GM13977 (cell line): ENCODE measurements at regions of chr7 and their contacts with region 1.

Region 1: DNA sequence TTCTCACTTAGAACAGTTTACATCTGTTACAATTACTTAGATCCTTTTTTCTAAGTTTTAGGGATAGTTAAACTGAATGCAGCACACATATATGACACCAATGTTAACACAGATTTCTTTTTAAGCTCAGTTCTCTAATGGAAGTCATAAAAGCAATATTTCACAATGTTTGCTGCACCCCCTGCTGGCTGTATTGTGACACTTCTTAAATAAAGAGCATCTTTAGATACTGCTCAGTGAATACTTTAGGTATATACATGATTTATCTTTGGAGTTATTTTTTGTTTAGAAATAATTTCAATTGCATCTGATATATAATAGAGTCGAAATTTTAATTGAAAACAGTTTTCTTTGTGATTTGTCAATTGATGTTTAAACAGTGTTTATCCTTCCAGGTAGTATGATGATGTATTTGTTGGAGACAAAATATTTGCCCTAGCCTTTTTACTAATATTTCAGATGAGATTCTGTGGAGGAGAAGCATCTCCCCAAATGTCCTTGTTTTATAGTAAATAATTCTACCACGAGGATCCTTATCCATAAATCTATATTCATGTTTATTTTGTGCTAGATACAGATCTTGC is 174.4 kb downstream of the ST7 start:
- DNase-seq: no peak
- CTCF ChIP-seq: peak; percentile 62

Region 2: DNA sequence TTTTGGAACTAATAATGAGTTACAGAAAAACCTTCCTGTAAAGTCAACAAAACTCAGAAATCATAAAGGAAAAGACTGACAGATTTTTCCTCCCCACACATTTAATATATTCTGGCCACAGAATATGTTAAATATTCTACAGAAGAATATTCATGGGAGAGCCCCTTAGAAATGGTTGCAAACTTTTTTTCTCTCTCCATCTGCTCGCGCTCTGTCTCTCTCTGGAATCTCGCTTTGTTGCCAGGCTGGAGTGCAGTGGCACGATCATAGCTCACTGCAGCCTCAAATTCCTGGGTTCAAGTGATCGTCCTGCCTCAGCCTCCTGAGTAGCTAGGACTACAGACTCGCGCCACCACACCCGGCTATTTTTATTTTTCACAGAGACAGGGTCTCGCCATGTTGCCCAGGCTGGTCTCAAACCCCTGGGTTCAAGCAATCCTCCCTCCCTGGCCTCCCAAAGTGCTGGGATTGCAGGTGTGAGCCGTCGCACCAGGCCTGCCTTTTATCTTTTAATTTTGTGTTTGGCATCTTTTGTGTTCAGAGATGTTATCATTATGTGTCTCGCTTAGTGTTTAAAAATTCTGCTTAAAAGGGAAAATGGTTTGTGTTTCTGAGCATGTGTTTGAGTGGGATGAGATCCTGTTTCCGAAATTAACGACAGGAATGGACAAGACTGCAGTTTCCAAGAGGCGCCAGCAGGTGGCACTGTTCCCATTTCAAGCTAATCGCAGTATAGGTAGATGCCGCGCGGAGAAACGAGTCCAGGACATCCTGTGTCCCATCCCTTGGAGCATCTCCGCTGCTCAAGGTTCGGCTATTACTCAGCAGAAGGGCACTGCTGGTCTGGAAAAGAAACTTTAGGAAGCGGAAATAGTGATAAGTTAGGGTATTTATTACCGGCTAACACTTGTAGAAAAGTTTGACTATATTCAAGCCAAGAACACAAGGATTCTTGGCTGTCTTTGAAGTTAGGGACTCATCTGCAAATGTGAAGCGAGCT is 197.5 kb before region 1 on chr7:
- in situ Hi-C with region 1: loop called (anchors 10 kb)
- DNase-seq: peak; percentile 75
- CTCF ChIP-seq: peak; percentile 76

Region 3: GRCh38 chr7:117068511-117069145 is 59.0 kb before region 1 on chr7:
- in situ Hi-C with region 1: no loop called
- DNase-seq: no peak
- CTCF ChIP-seq: no peak